Dendritic cell treated with granulocyte-macrophage colony-stimulating factor and Interleukin-4, amounts not matched to agents 40 ng/mL and 50 ng/mL, for 4 days (primary cell): ENCODE measurements at regions of chr18 and their contacts with region 1.

Region 1: DNA sequence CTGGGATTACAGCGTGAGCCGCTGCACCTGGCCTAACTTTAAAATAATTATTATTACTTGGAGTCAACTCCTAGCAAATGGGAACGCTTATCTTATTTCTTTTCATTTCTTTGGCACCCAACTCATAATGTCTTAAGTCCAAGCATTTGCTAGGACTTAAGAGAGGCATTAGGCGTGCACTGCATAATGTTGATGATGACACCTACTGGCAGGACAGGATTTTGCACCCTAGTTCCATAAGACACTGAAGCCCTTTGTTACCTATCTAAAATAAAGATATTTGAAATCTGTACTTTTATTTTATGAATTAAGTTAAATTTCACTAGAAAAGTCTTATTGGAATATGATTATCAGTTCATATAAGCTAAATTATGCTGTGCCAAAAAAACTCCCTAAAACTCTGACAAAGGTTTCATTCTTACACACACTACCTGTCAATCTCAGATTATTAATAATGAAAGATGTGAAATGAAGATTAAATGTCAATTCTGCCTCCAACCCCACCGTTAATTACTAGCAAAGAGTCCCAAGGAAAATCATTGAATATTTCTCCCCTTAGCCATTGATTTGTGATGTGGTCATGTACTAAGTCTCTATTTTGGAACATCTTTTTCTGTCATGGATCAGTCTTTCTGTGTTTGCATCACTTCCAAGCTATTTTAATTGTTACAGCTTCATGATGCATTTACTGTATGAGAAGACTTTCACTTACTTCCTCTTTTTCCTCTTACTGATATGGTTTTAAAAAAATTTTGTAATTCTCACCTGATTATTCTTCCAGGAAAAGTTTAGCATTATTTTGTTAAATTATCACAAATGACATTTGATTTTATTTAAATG is 12.7 kb upstream of the CDH2 start:
- H3K4me3 Mint-ChIP-seq: no peak overlapping the region
- H3K27ac Mint-ChIP-seq: no peak overlapping the region
- H3K4me1 Mint-ChIP-seq: no peaks in the 10 kb centered on the region
- H3K27me3 Mint-ChIP-seq: no peaks in the 10 kb centered on the region

Region 2: GRCh38 chr18:27605107-27605834 is 584.3 kb before region 1 on chr18:
- intact Hi-C with region 1: loop called (anchors 5 kb)
- H3K4me3 Mint-ChIP-seq: no peak overlapping the region
- H3K27ac Mint-ChIP-seq: no peak overlapping the region
- H3K4me1 Mint-ChIP-seq: no peaks in the 10 kb centered on the region
- H3K27me3 Mint-ChIP-seq: no peaks in the 10 kb centered on the region

Region 3: DNA sequence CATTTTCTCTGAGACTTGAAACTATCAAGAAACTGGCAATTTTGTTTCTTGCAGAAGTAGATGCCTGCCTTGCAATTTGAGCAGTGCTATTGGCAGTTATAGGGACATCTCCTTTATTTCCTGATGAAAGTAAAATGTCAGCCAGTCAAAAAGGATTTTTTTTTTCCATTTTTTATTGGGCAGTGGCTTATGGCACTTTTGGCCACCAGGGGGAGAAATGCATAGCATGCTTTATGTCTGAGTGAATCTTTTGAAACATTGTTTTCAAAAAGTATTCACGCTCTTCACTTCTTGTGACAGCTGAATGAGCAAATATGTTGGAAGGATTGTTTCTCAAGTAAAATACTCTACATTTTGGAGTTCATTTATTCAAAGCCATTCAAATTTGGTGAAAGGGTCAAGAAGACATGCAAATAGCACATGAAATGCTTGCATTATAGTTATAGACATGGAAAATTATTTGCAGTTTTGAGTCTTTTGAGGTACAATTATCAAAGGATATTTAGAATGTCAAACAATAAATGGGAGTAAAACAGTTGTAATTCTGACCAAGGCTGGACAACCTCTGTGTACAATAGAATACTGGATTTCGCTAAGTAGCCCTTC is 503.7 kb before region 1 on chr18:
- intact Hi-C with region 1: loop called (anchors 10 kb)
- H3K4me3 Mint-ChIP-seq: no peak overlapping the region
- H3K27ac Mint-ChIP-seq: no peak overlapping the region
- H3K4me1 Mint-ChIP-seq: no peaks in the 10 kb centered on the region
- H3K27me3 Mint-ChIP-seq: no peaks in the 10 kb centered on the region

Region 4: DNA sequence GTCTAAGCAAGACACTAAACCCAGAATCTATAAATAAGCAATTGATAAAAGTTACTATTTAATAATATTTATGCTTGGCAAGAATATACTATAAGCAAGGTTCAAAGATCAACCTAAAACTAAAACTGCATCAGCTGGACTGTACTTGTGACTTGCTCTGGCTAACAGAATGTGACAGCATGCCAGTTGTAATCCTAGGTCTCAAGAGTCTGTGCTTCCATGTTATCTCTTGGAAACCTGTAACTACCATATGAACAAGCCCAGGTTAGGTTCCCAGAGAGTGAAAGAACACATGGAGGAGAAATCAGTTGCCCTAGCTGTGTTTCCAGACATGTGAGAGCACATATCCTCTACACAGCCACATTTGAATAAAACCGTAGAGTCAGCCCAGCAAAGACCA is 310.1 kb before region 1 on chr18:
- intact Hi-C with region 1: no loop called
- H3K4me3 Mint-ChIP-seq: no peak overlapping the region
- H3K27ac Mint-ChIP-seq: no peak overlapping the region
- H3K4me1 Mint-ChIP-seq: no peaks in the 10 kb centered on the region
- H3K27me3 Mint-ChIP-seq: no peaks in the 10 kb centered on the region

Region 5: GRCh38 chr18:28541276-28541930 is 351.8 kb after region 1 on chr18:
- intact Hi-C with region 1: no loop called
- H3K4me3 Mint-ChIP-seq: no peak overlapping the region
- H3K27ac Mint-ChIP-seq: no peak overlapping the region
- H3K4me1 Mint-ChIP-seq: no peaks in the 10 kb centered on the region
- H3K27me3 Mint-ChIP-seq: no peaks in the 10 kb centered on the region